ENCODE measurements at regions of chrX and their contacts with region 1.

Region 1: GRCh38 chrX:101799387-101799786 is 132.4 kb downstream of the ZMAT1 start:
- DNase-seq: no peak
- H3K4me3 ChIP-seq: no peak overlapping the region
- H3K27ac ChIP-seq: no peak overlapping the region
- H3K4me1 ChIP-seq: no peaks in the 10 kb centered on the region
- H3K27me3 ChIP-seq: no peaks in the 10 kb centered on the region
- CTCF ChIP-seq: peak; percentile 61 to 64 (median 62)
- POLR2A ChIP-seq: no peak

Region 2: DNA sequence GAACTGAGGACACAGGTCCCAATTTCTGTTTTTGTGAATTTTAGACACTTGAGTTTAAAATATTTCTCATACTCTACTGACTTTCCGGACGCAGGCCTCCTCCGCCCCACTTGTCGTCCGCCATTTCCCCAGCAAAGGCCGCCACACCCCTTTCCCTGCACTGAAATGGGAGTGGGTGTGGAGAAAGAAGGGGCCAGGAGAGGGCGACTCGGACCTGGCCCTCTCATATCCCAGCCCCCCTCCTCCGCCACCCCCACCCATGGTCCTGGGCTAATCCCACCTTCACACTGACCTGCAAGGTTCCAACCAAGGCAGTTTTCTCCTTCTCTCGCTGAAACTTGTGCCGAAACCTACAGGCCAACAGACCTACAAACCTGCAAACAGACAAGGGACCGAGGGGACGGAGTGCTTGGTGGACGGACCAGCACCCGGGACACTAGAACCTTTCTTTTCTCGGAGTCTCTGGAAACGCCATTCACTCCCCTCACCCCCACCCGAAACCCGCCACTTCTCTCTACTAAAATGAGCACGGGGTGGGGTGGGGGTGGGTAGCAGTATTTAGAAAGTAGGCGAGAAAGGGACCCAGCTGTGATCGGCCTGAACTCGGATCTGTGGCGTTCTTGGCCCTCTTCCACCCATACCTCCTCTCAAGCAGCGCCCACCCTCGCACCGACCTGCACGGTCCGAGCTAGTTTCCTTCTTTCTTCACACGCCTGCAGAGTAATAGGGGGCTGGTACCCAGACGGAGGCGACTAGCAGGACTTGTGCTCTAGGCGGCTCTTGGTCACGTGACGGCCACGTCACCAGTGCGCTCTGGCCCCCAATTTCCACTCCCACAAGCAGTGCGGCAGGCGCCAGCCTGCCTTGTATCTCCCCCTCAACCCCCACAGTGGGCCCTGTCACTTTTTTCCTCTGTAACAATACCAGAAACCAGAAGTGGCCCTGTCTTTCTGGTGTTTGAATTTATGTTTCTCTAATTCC is 181.9 kb before region 1 on chrX and contains the start of gene ARMCX6:
- intact Hi-C with region 1: loop called (anchors 10 kb)
- DNase-seq: no peak
- H3K4me3 ChIP-seq: peak within 1 kb of the TSS; percentile 48 to 57
- H3K27ac ChIP-seq: peak within 1 kb of the TSS; percentile 75
- H3K4me1 ChIP-seq: peaks cover 7% of the 10 kb centered on the region
- H3K27me3 ChIP-seq: no peaks in the 10 kb centered on the region
- CTCF ChIP-seq: no peak
- POLR2A ChIP-seq: peak in 1 of 2 donors; percentile 31
- total RNA-seq, gene ARMCX6: 12.3 TPM

Measured in vagina (tissue), 2 donors.